WTC11 (cell line): ENCODE measurements at regions of chr2 and their contacts with region 1.

Region 1: DNA sequence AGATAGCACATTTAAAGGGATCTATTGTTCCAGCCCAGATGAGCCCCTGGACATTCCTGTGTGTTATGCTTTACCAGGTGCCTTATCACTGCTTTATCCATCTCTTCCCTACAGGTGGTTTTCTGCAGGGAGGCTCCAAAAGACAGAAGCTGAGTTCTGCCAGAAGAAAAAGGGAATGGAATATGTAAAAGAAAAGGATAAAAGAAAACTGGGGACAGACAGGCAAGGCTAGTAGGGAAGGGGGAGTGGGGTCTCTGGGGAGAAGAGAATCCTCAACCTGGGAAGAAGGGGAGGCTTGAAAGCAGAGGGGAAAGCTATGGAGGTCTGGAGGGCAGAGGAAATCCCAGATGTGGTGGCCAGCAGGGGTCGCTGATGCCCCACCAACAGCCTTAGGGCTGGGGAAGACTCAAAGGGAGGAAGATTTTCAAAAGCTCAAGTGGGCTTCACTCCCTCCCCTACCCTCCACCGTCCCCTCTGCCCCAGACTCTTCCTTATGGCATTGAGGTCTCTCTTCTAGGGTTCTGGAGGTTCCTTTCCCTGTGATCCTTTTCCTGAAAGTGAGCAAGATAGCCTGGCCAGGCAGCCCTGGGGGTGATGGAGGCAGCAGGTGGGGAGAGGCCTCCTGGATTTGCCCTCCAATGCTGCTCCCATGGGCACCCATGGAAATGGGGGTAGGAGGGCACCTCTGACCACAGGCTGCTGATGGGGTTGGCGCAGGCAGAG is 178.1 kb upstream of the PKDCC start:
- DNase-seq: peak; percentile 88
- ATAC-seq: peak; percentile 80
- H3K4me3 Mint-ChIP-seq: no peak overlapping the region
- H3K27ac Mint-ChIP-seq: no peak overlapping the region
- H3K4me1 Mint-ChIP-seq: peaks cover 43% of the 10 kb centered on the region
- H3K27me3 Mint-ChIP-seq: peaks cover 4% of the 10 kb centered on the region; the same call in 1 of the 2 replicates
- CTCF ChIP-seq: peak; percentile 85

Region 2: GRCh38 chr2:41853427-41854216 is 16.1 kb before region 1 on chr2:
- CTCF ChIA-PET with region 1: interaction called, 109 read pairs
- POLR2A ChIA-PET with region 1: no interaction called
- DNase-seq: peak; percentile 70
- ATAC-seq: peak; percentile 77
- H3K4me3 Mint-ChIP-seq: no peak overlapping the region
- H3K27ac Mint-ChIP-seq: no peak overlapping the region
- H3K4me1 Mint-ChIP-seq: peaks cover 6% of the 10 kb centered on the region
- H3K27me3 Mint-ChIP-seq: peaks cover 3% of the 10 kb centered on the region; the same call in 1 of the 2 replicates
- CTCF ChIP-seq: peak; percentile 65

Region 3: DNA sequence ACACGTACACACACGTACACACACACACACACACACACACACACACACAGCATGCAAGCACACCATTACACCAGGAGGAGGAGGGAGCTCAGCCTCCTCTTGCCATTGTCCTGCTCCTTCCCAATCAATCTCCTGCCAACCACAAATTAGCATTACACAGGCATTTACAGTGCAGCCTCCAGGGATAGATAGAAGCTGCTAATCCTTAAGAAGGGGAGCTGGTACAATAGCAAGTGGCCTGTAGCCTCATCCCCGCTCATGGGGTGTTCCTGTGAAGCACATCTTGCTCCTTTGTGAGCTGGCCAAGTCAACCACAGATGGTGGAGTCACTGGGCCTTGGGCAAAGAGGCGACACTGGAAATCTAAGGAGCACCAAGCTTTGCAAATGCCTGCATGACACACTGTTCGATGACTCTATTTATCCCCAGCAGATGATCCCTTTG is 67.8 kb after region 1 on chr2:
- CTCF ChIA-PET with region 1: interaction called, 36 read pairs
- POLR2A ChIA-PET with region 1: no interaction called
- DNase-seq: peak; percentile 38
- ATAC-seq: peak; percentile 79
- H3K4me3 Mint-ChIP-seq: peak overlapping the region; percentile 16; the same call in 1 of the 2 replicates
- H3K27ac Mint-ChIP-seq: peak overlapping the region; percentile 92
- H3K4me1 Mint-ChIP-seq: peaks cover 81% of the 10 kb centered on the region
- H3K27me3 Mint-ChIP-seq: no peaks in the 10 kb centered on the region; the same call in 1 of the 2 replicates
- CTCF ChIP-seq: no peak

Region 4: GRCh38 chr2:42035241-42035640 is 165.5 kb after region 1 on chr2:
- CTCF ChIA-PET with region 1: interaction called, 83 read pairs
- POLR2A ChIA-PET with region 1: no interaction called
- DNase-seq: no peak
- ATAC-seq: no peak
- H3K4me3 Mint-ChIP-seq: no peak overlapping the region
- H3K27ac Mint-ChIP-seq: no peak overlapping the region
- H3K4me1 Mint-ChIP-seq: peaks cover 33% of the 10 kb centered on the region
- H3K27me3 Mint-ChIP-seq: peaks cover 18% of the 10 kb centered on the region
- CTCF ChIP-seq: no peak

Region 5: DNA sequence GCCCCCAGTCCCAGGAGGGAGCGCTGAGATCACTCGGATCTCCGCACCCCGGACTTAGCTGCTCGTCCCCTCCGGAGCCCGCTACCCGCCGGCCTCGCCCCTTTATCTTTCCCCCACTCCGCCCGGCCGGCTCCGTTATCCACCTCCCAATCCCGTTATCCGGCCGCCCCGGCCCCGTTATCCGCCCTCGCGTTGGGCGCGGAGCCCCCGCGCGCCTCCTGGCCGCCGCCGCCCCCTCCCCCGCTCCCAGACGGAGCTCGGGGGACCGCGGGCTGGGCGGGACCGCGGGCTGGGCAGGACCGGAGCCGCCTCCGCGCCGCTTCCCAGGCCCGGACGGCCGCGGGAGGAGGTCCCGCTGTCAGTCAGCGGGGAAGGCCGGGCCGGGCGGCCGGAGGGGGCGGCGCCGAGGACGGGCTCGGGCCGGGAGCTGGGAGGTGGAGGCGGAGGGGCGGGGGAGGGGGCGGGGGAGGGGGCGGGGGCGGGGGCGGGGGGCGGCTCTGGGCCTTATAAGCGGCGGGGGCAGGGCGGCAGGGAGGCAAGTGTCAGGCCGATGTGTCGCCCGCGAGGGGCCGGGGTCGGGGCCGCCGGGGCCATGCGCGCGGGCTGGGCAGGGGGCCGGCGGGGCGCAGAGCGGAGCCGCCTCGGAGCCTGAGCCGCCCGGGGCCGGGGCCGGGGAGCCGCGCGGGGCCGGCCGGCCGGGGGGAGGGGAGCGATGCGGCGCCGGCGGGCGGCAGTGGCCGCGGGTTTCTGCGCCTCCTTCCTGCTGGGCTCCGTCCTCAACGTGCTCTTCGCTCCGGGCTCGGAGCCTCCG is 178.0 kb after region 1 on chr2 and contains the start of gene PKDCC:
- CTCF ChIA-PET with region 1: interaction called, 90 read pairs
- POLR2A ChIA-PET with region 1: interaction called, 20 read pairs
- DNase-seq: peak; percentile 85
- ATAC-seq: peak; percentile 66
- H3K4me3 Mint-ChIP-seq: peak within 1 kb of the TSS; percentile 79
- H3K27ac Mint-ChIP-seq: peak within 1 kb of the TSS; percentile 80; the same call in 1 of the 2 replicates
- H3K4me1 Mint-ChIP-seq: peaks cover 72% of the 10 kb centered on the region
- H3K27me3 Mint-ChIP-seq: peaks cover 20% of the 10 kb centered on the region
- CTCF ChIP-seq: no peak
- total RNA-seq, gene PKDCC: 15.1 to 27.3 TPM (median 15.6 TPM) in 3 replicates

Region 6: GRCh38 chr2:42060718-42061619 is 191.3 kb after region 1 on chr2:
- CTCF ChIA-PET with region 1: interaction called, 90 read pairs
- POLR2A ChIA-PET with region 1: no interaction called
- DNase-seq: no peak
- ATAC-seq: no peak; the same call in 1 of the 2 replicates
- H3K4me3 Mint-ChIP-seq: no peak overlapping the region
- H3K27ac Mint-ChIP-seq: no peak overlapping the region
- H3K4me1 Mint-ChIP-seq: peaks cover 4% of the 10 kb centered on the region
- H3K27me3 Mint-ChIP-seq: no peaks in the 10 kb centered on the region
- CTCF ChIP-seq: no peak

Region 7: DNA sequence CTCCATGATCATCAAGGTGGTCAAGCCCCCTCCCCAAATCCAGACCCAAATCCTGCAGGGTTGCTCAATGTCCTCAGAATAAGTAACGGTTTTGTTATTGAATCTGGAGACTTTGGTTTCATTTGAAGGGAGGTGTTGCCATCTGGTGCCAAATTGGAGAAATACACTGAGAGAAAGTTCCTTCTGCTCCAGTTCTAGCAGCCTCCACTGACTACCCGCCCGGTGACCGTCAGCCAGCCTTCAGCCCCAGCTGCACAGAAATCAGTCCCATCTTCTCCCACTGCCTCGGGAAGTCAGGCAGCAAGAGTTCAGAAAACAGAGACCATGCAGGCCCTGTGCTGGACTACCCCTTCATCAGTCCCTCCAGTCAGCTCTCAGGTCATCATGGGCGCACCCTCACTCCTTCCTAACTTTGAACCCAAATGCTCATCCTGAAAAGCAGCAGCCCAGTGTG is 216.8 kb after region 1 on chr2:
- CTCF ChIA-PET with region 1: interaction called, 207 read pairs
- POLR2A ChIA-PET with region 1: interaction called, 3 read pairs
- DNase-seq: peak; percentile 60
- ATAC-seq: peak; percentile 74
- H3K4me3 Mint-ChIP-seq: no peak overlapping the region
- H3K27ac Mint-ChIP-seq: no peak overlapping the region
- H3K4me1 Mint-ChIP-seq: peaks cover 7% of the 10 kb centered on the region
- H3K27me3 Mint-ChIP-seq: peaks cover 22% of the 10 kb centered on the region
- CTCF ChIP-seq: peak; percentile 75